ENCODE measurements at regions of chr11 and their contacts with region 1.

Region 1: GRCh38 chr11:45771566-45772448 is 33.1 kb upstream of the SLC35C1 start:
- DNase-seq: peak; percentile 75
- H3K4me3 ChIP-seq: peak overlapping the region; percentile 22 to 37
- H3K27ac ChIP-seq: peak overlapping the region; percentile 40 to 46
- H3K4me1 ChIP-seq: no peaks in the 10 kb centered on the region
- H3K27me3 ChIP-seq: no peaks in the 10 kb centered on the region
- CTCF ChIP-seq: peak; percentile 59 to 96 (median 88)
- POLR2A ChIP-seq: no peak

Region 2: GRCh38 chr11:45339729-45340519 is 431.9 kb before region 1 on chr11:
- intact Hi-C with region 1: loop called (anchors 2 kb)
- DNase-seq: peak; percentile 94
- H3K4me3 ChIP-seq: peak overlapping the region in 1 of 2 donors; percentile 7
- H3K27ac ChIP-seq: no peak overlapping the region
- H3K4me1 ChIP-seq: peaks cover 2% of the 10 kb centered on the region
- H3K27me3 ChIP-seq: no peaks in the 10 kb centered on the region
- CTCF ChIP-seq: peak; percentile 81 to 95 (median 92)
- POLR2A ChIP-seq: no peak

Region 3: GRCh38 chr11:45371251-45372115 is 400.3 kb before region 1 on chr11:
- intact Hi-C with region 1: loop called (anchors 10 kb)
- DNase-seq: peak; percentile 63
- H3K4me3 ChIP-seq: no peak overlapping the region
- H3K27ac ChIP-seq: no peak overlapping the region
- H3K4me1 ChIP-seq: peaks cover 2% of the 10 kb centered on the region
- H3K27me3 ChIP-seq: no peaks in the 10 kb centered on the region
- CTCF ChIP-seq: peak; percentile 75 to 87 (median 81)
- POLR2A ChIP-seq: no peak

Region 4: GRCh38 chr11:45538363-45538762 is 233.4 kb before region 1 on chr11:
- intact Hi-C with region 1: loop called (anchors 10 kb)
- DNase-seq: no peak
- H3K4me3 ChIP-seq: no peak overlapping the region
- H3K27ac ChIP-seq: no peak overlapping the region
- H3K4me1 ChIP-seq: no peaks in the 10 kb centered on the region
- H3K27me3 ChIP-seq: no peaks in the 10 kb centered on the region
- CTCF ChIP-seq: no peak
- POLR2A ChIP-seq: no peak

Region 5: GRCh38 chr11:45655347-45655756 is 116.5 kb before region 1 on chr11:
- intact Hi-C with region 1: loop called (anchors 10 kb)
- DNase-seq: peak; percentile 59
- H3K4me3 ChIP-seq: no peak overlapping the region
- H3K27ac ChIP-seq: no peak overlapping the region
- H3K4me1 ChIP-seq: no peaks in the 10 kb centered on the region
- H3K27me3 ChIP-seq: no peaks in the 10 kb centered on the region
- CTCF ChIP-seq: peak; percentile 54 to 84 (median 71)
- POLR2A ChIP-seq: no peak